Activated naive CD4-positive, alpha-beta T cell treated with anti-CD3 and anti-CD28 coated beads for 36 hours (primary cell): ENCODE measurements at regions of chr9 and their contacts with region 1.

Region 1: DNA sequence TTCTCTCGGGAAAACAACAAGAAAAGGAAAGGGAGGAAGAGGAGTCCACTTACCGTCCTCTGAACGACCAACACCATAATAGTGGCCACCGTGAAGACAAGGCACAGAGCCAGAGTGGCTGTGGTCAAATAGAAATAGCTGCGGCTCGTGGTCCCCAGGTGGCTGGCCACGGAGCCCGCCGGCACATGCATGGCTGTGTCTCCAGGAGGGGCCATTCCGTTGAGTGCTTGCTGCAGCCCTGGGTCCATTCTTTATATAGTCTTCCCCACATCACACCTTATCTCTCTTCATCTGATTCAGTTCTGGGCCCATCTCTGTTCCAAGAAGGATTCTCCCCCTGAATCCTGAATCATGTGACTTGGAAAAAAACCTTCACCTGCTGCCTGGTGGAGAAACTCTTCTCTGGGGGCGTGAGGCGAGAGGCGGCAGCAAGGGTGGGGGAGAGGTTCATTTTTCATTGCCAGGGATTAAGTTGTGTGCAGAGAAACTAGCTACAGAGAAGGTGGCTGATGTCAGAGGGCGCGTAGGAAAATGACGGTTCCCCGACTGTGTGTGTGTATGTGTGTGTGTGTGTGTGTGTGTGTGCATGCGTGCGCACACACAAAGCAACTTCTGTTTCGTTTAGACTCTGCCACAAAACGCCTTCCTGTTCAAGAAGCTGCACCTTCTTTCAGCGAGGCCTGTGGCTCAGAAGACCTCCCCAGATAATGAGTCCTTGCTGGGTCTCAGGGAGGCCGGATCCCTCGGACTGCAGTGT is at the start of gene TNFSF8:
- DNase-seq: peak; percentile 90
- H3K4me3 Mint-ChIP-seq: peak within 1 kb of the TSS; percentile 94
- H3K27ac Mint-ChIP-seq: peak within 1 kb of the TSS; percentile 97
- H3K4me1 Mint-ChIP-seq: peaks cover 38% of the 10 kb centered on the region
- H3K27me3 Mint-ChIP-seq: no peaks in the 10 kb centered on the region
- total RNA-seq, gene TNFSF8: 25.9 to 26.4 TPM

Region 2: DNA sequence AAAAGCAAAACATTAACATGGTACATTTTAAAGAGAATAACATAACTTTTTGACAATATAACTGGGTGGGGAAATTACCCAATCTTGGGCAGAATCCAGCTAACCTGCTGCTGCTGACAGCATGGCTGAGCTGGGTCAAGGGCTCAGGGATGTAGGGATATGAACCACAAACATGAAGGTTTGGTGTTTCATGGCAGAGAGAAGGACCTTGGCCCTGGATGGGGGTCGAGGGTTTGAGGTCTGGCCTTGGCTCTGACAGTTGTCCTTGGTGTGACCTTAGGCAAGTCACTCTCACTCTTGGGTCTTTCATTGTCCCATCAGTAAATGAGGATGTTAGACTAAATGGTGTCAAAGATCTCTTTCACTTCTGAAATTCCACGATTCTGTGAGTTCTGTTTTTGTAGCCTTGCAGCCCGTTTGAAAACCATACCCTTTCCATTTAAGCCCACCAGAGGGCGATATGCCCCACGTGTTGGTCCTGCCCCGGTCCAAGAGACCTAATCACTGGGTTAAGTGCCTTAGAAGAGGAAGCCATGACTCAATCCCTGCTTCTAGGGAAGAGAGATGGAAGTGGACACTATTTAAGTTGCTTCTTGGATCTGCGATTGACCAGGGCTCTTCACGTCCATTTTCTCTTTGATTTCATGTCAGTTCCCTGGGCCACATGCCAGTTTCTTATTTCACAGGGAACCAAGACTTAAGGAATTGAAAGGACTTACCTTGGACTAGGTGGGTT is 191.5 kb before region 1 on chr9:
- CTCF ChIA-PET with region 1: interaction called, 10 read pairs
- intact Hi-C with region 1: no loop called
- DNase-seq: peak; percentile 82
- H3K4me3 Mint-ChIP-seq: no peak overlapping the region
- H3K27ac Mint-ChIP-seq: peak overlapping the region; percentile 86
- H3K4me1 Mint-ChIP-seq: peaks cover 56% of the 10 kb centered on the region
- H3K27me3 Mint-ChIP-seq: no peaks in the 10 kb centered on the region

Region 3: GRCh38 chr9:114836769-114837168 is 93.5 kb before region 1 on chr9:
- CTCF ChIA-PET with region 1: no interaction called
- intact Hi-C with region 1: no loop called
- DNase-seq: peak; percentile 37
- H3K4me3 Mint-ChIP-seq: no peak overlapping the region
- H3K27ac Mint-ChIP-seq: no peak overlapping the region
- H3K4me1 Mint-ChIP-seq: peaks cover 8% of the 10 kb centered on the region
- H3K27me3 Mint-ChIP-seq: no peaks in the 10 kb centered on the region

Region 4: GRCh38 chr9:114906908-114907571 is 23.2 kb before region 1 on chr9:
- CTCF ChIA-PET with region 1: interaction called, 36 read pairs
- intact Hi-C with region 1: loop called (anchors 1 kb)
- DNase-seq: peak; percentile 46
- H3K4me3 Mint-ChIP-seq: no peak overlapping the region
- H3K27ac Mint-ChIP-seq: peak overlapping the region; percentile 98
- H3K4me1 Mint-ChIP-seq: peaks cover 54% of the 10 kb centered on the region
- H3K27me3 Mint-ChIP-seq: no peaks in the 10 kb centered on the region

Region 5: DNA sequence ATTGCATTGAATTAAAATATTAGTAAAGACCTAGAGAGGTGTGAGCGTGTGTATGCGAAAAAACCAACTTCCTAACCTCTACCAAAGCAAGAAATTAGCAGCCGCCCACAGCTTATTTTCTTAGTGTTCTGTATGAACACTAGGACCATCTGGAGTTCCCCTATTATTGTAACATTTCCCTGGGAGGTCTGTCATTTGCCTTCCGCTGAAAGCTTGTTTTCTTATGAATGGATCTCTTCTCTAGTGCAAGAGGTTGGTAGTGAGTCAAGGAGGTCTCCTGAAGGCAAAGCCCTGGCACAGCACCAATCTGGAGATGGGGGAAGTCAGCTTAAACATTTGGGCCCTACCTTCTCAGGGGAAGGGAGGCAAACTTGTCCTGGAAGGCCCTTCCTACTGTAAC is 10.6 kb before region 1 on chr9:
- CTCF ChIA-PET with region 1: interaction called, 14 read pairs
- intact Hi-C with region 1: loop called (anchors 1 kb)
- DNase-seq: peak; percentile 68
- H3K4me3 Mint-ChIP-seq: peak overlapping the region; percentile 11
- H3K27ac Mint-ChIP-seq: peak overlapping the region; percentile 74
- H3K4me1 Mint-ChIP-seq: peaks cover 88% of the 10 kb centered on the region
- H3K27me3 Mint-ChIP-seq: no peaks in the 10 kb centered on the region

Region 6: DNA sequence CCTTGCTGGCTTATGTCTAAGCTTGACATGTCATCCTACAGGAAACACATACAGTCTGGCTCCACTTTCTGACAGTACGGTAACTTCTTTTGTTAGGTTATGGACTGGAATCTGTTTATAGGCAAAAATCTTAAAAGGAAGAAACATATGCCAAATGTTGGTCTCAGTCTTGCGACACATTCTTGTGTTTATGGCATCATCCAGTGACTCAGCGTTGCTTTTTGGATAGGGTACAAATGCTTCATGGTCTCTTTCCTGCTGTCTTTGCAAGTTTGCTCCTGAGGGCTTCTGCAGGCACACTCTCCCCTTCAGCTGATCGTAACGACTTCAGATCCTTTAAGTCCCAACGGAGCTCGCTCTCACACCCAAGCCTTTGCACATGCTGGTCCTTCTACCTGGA is 23.7 kb after region 1 on chr9:
- CTCF ChIA-PET with region 1: no interaction called
- intact Hi-C with region 1: loop called (anchors 1 kb)
- DNase-seq: peak; percentile 62
- H3K4me3 Mint-ChIP-seq: no peak overlapping the region
- H3K27ac Mint-ChIP-seq: peak overlapping the region; percentile 8
- H3K4me1 Mint-ChIP-seq: peaks cover 33% of the 10 kb centered on the region
- H3K27me3 Mint-ChIP-seq: no peaks in the 10 kb centered on the region

Region 7: DNA sequence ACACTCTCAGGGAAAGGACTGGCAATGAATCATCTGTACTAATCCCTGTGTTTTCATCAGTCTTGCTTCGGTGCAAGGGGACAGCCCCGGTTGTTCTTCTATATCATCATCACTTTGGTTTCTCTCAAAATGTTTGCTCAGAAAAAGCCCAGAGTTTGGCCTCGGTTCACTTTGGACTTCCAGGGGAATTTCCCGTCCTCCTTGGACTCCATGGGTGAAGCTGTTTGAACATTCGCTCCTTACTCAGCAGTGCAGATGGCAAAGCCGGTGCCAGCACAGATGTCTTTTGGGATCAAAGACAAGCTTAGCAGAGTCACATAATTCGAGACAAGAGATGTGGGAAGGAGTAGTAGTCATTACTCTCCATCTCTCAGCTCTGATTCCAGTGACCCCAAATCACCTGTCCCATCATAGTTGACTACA is 70.0 kb after region 1 on chr9:
- CTCF ChIA-PET with region 1: no interaction called
- intact Hi-C with region 1: loop called (anchors 1 kb)
- DNase-seq: peak; percentile 68
- H3K4me3 Mint-ChIP-seq: peak overlapping the region; percentile 66
- H3K27ac Mint-ChIP-seq: peak overlapping the region; percentile 83
- H3K4me1 Mint-ChIP-seq: peaks cover 51% of the 10 kb centered on the region
- H3K27me3 Mint-ChIP-seq: no peaks in the 10 kb centered on the region